Activated B cell treated with CpG ODN at 0.5 μM for 24 hours (primary cell): ENCODE measurements at regions of chr17 and their contacts with region 1.

Region 1: GRCh38 chr17:8997994-8998628 is 23.2 kb upstream of the NTN1 start:
- DNase-seq: peak; percentile 72
- ATAC-seq: peak; percentile 74
- H3K4me3 Mint-ChIP-seq: no peak overlapping the region
- H3K27ac Mint-ChIP-seq: no peak overlapping the region
- H3K4me1 Mint-ChIP-seq: peaks cover 22% of the 10 kb centered on the region
- H3K27me3 Mint-ChIP-seq: peaks cover 10% of the 10 kb centered on the region
- CTCF ChIP-seq: peak; percentile 73

Region 2: GRCh38 chr17:8753976-8754440 is 244.1 kb before region 1 on chr17:
- CTCF ChIA-PET with region 1: interaction called, 6 read pairs
- POLR2A ChIA-PET with region 1: no interaction called
- intact Hi-C with region 1: loop called (anchors 1 kb)
- DNase-seq: no peak
- ATAC-seq: no peak
- H3K4me3 Mint-ChIP-seq: no peak overlapping the region
- H3K27ac Mint-ChIP-seq: no peak overlapping the region
- H3K4me1 Mint-ChIP-seq: no peaks in the 10 kb centered on the region
- H3K27me3 Mint-ChIP-seq: peaks cover 30% of the 10 kb centered on the region
- CTCF ChIP-seq: no peak

Region 3: GRCh38 chr17:8798846-8799569 is 199.1 kb before region 1 on chr17 and contains the start of gene MFSD6L:
- CTCF ChIA-PET with region 1: interaction called, 15 read pairs
- POLR2A ChIA-PET with region 1: no interaction called
- intact Hi-C with region 1: loop called (anchors 1 kb)
- DNase-seq: no peak
- ATAC-seq: peak; percentile 71
- H3K4me3 Mint-ChIP-seq: peak within 1 kb of the TSS; percentile 38
- H3K27ac Mint-ChIP-seq: no peak within 1 kb of the TSS
- H3K4me1 Mint-ChIP-seq: peaks cover 11% of the 10 kb centered on the region
- H3K27me3 Mint-ChIP-seq: no peaks in the 10 kb centered on the region
- CTCF ChIP-seq: no peak
- total RNA-seq, gene MFSD6L: 0.20 TPM in 1 of 2 replicates, not detected in the other